Posterior cingulate gyrus (tissue), 11 donors: ENCODE measurements at regions of chrX and their contacts with region 1.

Region 1: DNA sequence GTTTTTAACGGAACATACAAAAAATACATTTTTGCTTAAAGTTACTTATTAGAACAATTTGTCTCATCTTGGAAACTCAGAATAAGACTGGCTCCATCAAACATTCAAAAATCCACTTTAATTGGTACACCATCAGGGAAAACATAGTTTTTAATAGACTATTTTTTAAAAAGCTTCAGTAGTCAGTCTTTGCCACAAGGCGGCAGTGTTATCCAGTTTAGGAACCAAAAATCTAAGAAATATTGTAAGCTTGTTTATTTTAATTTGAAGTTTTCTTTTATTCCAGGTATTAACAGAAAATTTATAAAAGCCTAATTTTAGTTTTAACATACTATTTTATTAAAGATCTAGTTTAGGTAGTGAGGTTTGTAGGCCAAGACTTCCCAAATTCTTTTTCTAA is 107.7 kb downstream of the APOOL start:
- DNase-seq: no peak

Region 2: DNA sequence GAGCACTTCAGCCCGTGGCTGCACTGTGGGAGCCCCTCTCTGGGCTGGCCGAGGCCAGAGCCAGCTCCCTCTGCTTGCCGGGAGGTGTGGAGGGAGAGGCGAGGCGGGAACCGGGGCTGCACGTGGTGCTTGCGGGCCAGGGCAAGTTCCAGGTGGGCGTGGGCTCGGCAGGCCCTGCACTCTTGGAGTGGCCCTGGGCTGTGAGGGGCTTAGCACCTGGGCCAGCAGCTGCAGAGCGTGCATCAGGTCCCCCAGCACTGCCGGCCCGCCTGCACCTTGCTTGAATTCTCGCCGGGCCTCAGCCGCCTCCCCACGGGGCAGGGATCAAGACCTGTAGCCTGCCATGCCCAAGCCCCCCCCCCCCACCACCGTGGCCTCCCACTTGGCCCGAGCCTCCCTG is 136.5 kb before region 1 on chrX:
- intact Hi-C with region 1: no loop called
- DNase-seq: peak in 2 of 10 donors; percentile 52 to 69

Region 3: DNA sequence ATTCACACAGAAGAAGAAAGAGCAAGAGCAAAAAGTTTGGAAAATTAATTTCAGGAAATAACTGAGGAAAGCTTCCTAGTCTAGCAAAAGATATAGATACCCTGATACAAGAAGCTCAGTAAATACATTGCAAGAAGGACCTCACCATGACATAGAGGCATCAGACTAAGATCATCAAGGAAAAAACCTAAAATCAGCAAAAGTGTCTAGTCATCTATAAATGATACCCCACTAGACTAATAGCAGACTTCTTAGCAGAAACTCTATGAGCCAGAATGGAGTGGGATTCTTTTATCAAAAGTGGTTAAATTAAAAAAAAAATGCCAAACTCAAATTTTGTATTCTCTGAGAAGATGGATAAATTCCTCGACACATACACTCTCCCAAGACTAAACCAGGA is 118.2 kb before region 1 on chrX:
- intact Hi-C with region 1: no loop called
- DNase-seq: no peak

Region 4: DNA sequence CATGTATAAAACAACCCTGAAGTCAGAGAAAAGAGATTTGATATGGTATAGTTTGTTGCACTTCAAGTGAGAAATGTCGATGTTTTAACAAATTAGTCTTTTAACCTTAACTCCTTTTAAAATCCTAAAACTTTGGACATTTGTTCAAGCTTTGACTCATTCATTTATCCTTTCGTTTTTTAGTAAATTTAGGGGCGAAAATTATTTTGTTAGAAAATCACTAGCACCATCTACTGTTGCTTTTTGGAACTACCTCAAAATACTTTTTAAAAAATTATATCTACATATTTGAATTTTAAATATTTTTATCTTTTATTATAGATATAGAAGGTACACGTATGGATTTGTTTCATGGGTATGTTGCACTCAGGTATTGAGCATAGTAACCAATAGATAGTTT is 433.3 kb after region 1 on chrX:
- intact Hi-C with region 1: loop called (anchors 1 kb)
- DNase-seq: no peak